ENCODE measurements at regions of chr3 and their contacts with region 1.

Region 1: GRCh38 chr3:172461530-172462138 is 13.4 kb upstream of the GHSR start:
- DNase-seq: peak in 2 of 5 donors; percentile 9 to 16
- H3K4me3 ChIP-seq: no peak overlapping the region
- H3K4me3 Mint-ChIP-seq: no peak overlapping the region
- H3K27ac ChIP-seq: no peak overlapping the region
- H3K27ac Mint-ChIP-seq: no peak overlapping the region
- H3K4me1 ChIP-seq: no peaks in the 10 kb centered on the region
- H3K4me1 Mint-ChIP-seq: no peaks in the 10 kb centered on the region
- H3K27me3 ChIP-seq: no peaks in the 10 kb centered on the region
- H3K27me3 Mint-ChIP-seq: peaks cover 2 to 3% of the 10 kb centered on the region in 2 donors

Region 2: DNA sequence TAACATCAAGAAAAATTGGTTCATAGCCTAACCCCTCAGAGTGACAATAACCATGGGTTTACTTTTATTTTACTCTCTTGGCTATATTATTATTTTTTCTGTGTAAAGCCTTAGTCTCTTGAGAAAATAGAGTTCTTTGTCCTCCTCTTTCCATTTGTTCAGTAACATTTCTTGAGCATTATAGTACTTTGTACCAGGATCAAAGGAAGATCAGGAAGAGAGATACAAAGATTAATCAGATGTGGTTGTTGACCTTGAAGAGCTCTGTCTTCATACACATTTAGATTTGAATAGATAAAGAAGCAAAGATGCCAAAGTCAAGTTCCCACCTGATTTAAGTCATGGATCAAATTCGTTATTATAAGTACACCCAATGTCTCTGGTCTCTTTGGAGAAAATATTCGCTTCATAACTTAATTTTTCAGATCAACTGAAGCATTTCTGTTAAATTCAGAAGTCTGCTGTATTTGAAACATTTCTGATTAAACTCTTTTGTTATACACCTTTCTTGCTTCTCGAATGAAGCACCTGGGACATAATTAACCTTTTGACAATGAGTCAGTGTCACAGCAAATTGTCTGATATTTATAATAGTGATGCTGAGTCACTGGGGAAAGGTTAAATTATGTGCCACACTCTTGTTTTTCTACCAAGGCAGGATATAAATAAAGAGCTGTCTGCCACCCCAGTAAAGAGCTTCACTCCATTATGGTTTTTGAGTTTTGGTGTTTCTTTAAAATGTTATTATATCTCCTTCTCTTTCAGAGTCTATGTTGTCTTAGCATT is 113.5 kb before region 1 on chr3:
- CTCF ChIA-PET with region 1: no interaction called
- POLR2A ChIA-PET with region 1: no interaction called
- DNase-seq: no peak
- H3K4me3 ChIP-seq: no peak overlapping the region
- H3K4me3 Mint-ChIP-seq: no peak overlapping the region
- H3K27ac ChIP-seq: no peak overlapping the region
- H3K27ac Mint-ChIP-seq: peak overlapping the region in 1 of 8 donors; percentile 17
- H3K4me1 ChIP-seq: no peaks in the 10 kb centered on the region
- H3K4me1 Mint-ChIP-seq: no peaks in the 10 kb centered on the region
- H3K27me3 ChIP-seq: no peaks in the 10 kb centered on the region
- H3K27me3 Mint-ChIP-seq: no peaks in the 10 kb centered on the region

Region 3: GRCh38 chr3:172476347-172476746 is 14.7 kb after region 1 on chr3:
- CTCF ChIA-PET with region 1: interaction called, 19 read pairs
- POLR2A ChIA-PET with region 1: no interaction called
- DNase-seq: no peak
- H3K4me3 ChIP-seq: no peak overlapping the region
- H3K4me3 Mint-ChIP-seq: peak overlapping the region; percentile 37 to 94 (median 90)
- H3K27ac ChIP-seq: no peak overlapping the region
- H3K27ac Mint-ChIP-seq: peak overlapping the region in 1 of 8 donors; percentile 53
- H3K4me1 ChIP-seq: no peaks in the 10 kb centered on the region
- H3K4me1 Mint-ChIP-seq: peaks cover 9 to 19% (median 18%) of the 10 kb centered on the region in 3 donors
- H3K27me3 ChIP-seq: no peaks in the 10 kb centered on the region
- H3K27me3 Mint-ChIP-seq: peaks cover 2 to 5% of the 10 kb centered on the region in 2 donors

Region 4: DNA sequence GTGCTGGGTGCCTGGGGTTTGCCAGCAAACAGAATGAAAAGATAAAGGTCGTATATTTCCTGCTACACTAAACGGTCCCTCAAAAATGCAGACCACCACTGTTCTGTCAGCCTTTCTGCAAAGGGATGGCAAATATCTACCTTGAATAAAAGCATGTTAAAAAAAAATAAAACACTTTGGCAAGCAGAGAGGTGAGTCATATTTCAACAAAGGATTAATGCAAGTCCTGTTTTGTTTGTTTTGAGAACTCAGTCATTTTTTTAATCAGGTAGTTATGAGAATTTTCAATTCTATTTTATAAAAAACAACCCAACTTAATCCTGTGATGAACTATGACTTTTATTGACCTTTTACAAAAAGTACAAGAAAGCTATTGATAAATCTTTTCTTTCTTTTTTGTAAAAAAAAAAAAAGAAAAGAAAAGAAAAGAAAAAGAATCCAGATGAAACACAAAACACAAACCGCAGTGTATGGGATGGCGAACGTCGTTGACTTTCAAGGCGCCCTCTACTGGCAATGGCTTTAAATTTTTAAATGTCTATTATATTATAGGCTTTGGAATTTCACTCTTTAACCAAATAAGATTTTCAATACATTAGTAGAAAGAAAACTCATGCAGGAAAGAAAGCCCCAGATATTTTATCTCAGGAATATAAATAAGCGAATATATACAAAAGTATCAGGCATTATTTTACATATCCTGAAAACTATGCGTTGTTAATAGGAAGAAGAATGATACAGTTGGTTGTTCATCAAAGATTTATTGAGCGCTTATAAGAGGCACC is 161.5 kb after region 1 on chr3:
- CTCF ChIA-PET with region 1: interaction called, 3 read pairs
- POLR2A ChIA-PET with region 1: interaction called, 13 read pairs
- DNase-seq: peak in 4 of 5 donors; percentile 6 to 15 (median 10)
- H3K4me3 ChIP-seq: no peak overlapping the region
- H3K4me3 Mint-ChIP-seq: peak overlapping the region in 5 of 7 donors; percentile 29 to 70 (median 38)
- H3K27ac ChIP-seq: no peak overlapping the region
- H3K27ac Mint-ChIP-seq: peak overlapping the region in 1 of 8 donors; percentile 33
- H3K4me1 ChIP-seq: no peaks in the 10 kb centered on the region
- H3K4me1 Mint-ChIP-seq: peaks cover 3 to 10% (median 8%) of the 10 kb centered on the region in 3 donors
- H3K27me3 ChIP-seq: no peaks in the 10 kb centered on the region
- H3K27me3 Mint-ChIP-seq: no peaks in the 10 kb centered on the region